IMR-90 (cell line): ENCODE measurements at regions of chr15 and their contacts with region 1.

Region 1: DNA sequence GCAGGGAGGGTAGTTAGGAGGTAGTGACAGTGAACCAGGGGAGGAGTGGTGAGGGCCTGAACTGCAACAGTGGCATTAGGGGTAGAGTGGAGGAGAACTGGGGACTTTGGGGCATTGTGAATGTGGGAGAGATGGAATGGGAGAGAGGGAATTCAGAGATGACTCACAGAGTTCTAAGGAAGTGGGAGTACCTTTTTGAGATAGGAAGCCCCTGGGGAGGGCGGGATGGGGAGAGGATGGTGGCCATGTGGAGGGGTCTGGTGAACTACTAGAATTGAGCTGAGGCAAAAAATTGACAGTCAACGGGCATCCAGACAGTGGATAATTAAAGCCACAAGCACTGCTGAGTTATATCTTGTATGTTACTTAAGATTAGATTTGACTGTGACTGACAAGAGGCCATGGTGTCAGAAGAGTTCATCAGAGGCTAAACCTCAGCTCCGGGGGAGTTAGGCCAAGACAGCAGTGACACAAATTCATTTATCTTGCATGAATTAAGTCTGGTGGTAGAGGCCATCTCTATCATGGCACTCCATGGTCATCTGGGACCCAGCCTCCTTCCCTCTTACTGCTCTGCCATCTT is 34.0 kb downstream of the PLEKHO2 start:
- DNase-seq: no peak
- ATAC-seq: no peak
- H3K4me3 ChIP-seq: no peak overlapping the region
- H3K27ac ChIP-seq: no peak overlapping the region
- H3K4me1 ChIP-seq: peaks cover 15% of the 10 kb centered on the region
- H3K27me3 ChIP-seq: no peaks in the 10 kb centered on the region
- CTCF ChIP-seq: no peak
- POLR2A ChIP-seq: no peak
- RAD21 ChIP-seq: no peak

Region 2: DNA sequence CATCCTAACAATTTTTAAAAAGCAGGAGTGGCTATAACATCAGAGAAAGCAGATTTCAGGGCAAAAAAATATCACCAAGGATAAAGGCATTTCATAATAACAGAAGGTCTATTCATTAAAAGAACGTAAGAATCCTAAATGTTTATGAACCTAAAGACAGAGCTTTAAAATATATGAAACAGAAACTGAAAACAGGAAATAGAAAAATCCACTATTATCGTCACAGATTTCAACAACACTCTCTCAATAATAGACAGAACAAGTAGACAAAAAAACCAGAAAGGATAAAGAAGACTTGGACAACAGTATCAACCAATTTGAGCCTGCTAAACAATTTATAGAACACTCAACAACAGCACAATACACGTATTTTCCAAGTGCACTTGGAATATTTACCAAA is 1207.1 kb before region 1 on chr15:
- CTCF ChIA-PET with region 1: no interaction called
- POLR2A ChIA-PET with region 1: no interaction called
- dilution Hi-C with region 1: no loop called
- in situ Hi-C with region 1: no loop called
- intact Hi-C with region 1: no loop called
- DNase-seq: no peak
- ATAC-seq: no peak
- H3K4me3 ChIP-seq: no peak overlapping the region
- H3K27ac ChIP-seq: no peak overlapping the region
- H3K4me1 ChIP-seq: no peaks in the 10 kb centered on the region
- H3K27me3 ChIP-seq: no peaks in the 10 kb centered on the region
- CTCF ChIP-seq: no peak
- POLR2A ChIP-seq: no peak
- RAD21 ChIP-seq: no peak

Region 3: GRCh38 chr15:64193971-64194370 is 681.8 kb before region 1 on chr15:
- CTCF ChIA-PET with region 1: no interaction called
- POLR2A ChIA-PET with region 1: interaction called, 11 read pairs
- dilution Hi-C with region 1: no loop called
- in situ Hi-C with region 1: no loop called
- intact Hi-C with region 1: no loop called
- DNase-seq: no peak
- ATAC-seq: no peak
- H3K4me3 ChIP-seq: no peak overlapping the region
- H3K27ac ChIP-seq: no peak overlapping the region
- H3K4me1 ChIP-seq: no peaks in the 10 kb centered on the region
- H3K27me3 ChIP-seq: no peaks in the 10 kb centered on the region
- CTCF ChIP-seq: no peak
- POLR2A ChIP-seq: no peak
- RAD21 ChIP-seq: no peak